Sciatic nerve (tissue), 2 donors: ENCODE measurements at regions of chr1 and their contacts with region 1.

Region 1: DNA sequence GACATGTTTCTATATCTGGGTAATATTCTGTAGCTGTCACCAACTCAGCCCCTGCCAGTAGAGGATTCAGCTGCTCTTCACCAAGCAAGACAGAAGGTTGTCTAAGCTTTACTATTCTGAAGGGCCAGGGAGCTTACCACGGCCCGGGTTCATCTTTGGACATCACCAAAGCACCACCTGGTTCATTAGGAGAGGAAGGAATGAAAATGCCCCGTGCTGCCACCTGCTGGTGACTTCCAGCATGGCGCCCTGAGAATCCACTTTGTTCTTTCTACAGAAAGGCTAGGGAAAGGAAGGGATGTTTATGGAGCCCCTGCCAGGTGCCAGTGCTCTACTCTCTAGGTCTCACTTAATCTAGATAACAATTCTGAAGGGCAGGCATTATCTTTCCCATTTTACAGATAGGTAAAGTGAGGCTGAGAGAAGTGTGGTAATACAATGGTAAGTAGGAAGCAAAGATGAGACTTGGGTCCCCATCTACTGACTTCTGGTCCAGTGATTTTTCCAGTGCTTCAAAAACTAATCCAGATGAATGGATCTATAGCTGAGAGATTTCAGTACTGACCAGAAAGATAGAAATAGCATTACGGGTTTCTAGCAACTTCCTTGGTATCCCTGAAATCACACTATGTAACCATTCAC is 79.5 kb downstream of the BEND5 start:
- DNase-seq: peak; percentile 83
- ATAC-seq: peak; percentile 64

Region 2: GRCh38 chr1:48572646-48573261 is 124.4 kb before region 1 on chr1:
- intact Hi-C with region 1: loop called (anchors 5 kb)
- DNase-seq: peak; percentile 75
- ATAC-seq: peak; percentile 86

Region 3: DNA sequence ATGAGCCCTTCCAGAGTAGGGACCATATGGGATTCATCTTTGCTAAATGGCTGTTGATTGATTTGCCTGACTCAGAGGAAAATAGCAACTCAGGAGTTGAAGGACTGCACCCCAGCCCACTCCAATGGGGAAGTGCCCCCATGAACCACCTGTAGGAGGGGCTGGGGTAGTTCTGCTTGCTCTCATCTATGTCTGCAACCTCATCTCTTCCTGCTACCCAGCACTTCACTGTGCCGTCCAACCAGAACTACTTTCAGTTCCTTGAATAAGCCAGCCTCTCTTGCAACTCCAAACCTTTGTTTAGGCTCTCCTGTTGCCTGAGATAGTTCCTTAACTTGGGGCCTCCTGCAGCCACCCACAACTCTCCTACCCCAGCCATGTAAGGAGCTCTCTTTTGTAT is 52.9 kb after region 1 on chr1:
- intact Hi-C with region 1: no loop called
- DNase-seq: no peak
- ATAC-seq: no peak